ENCODE measurements at regions of chrX and their contacts with region 1.

Region 1: DNA sequence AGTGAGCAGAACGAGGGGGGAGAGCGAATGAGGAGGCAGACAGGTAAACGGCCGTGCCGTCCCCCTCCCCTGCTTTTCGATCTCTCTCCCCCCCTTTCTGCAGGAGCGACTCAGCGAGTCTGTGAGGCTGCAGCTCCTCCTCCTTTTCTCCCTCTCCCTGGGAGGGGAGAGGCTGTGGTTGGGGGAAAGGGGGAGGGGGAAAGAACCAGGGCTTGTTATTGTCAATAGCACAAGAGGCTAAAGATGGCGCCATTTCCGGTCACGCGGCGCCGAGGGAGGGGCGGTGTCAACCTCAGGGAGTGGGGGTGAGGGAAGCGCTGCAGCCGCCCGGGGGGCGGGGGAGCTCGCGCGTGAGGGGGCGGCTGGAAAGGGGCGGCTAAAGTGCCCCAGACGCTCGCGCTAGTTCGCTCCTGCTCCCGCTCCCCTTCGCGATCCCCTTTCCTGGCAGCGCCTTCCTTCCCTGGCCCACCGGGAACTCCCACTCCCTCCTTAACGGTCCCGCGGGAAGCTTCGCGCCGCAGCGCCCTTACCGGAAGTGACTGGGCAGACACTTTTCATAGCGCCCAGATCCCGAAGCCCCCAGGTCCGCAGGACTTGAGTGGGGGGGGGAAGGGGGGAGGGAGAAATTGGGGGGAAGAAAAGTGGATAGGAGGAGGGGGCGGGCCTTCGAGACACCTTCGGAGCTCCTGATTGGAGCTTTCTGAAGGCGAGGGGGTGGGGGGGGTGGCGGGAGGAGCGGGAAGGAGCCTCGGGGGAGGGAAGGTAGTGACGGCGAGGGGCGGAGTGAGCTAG is at the start of gene CUL4B:
- DNase-seq: peak; percentile 84 to 95 (median 89)
- H3K4me3 ChIP-seq: peak within 1 kb of the TSS; percentile 84
- H3K4me3 Mint-ChIP-seq: peak within 1 kb of the TSS; percentile 91 to 99 (median 96)
- H3K27ac ChIP-seq: peak within 1 kb of the TSS; percentile 94
- H3K27ac Mint-ChIP-seq: peak within 1 kb of the TSS; percentile 92 to 99 (median 96)
- H3K4me1 ChIP-seq: peaks cover 25% of the 10 kb centered on the region
- H3K4me1 Mint-ChIP-seq: peaks cover 20 to 39% (median 39%) of the 10 kb centered on the region in 3 donors
- H3K27me3 ChIP-seq: no peaks in the 10 kb centered on the region
- H3K27me3 Mint-ChIP-seq: peaks cover 0 to 2% of the 10 kb centered on the region in 2 donors
- total RNA-seq, gene CUL4B: 26.4 to 28.9 TPM

Region 2: DNA sequence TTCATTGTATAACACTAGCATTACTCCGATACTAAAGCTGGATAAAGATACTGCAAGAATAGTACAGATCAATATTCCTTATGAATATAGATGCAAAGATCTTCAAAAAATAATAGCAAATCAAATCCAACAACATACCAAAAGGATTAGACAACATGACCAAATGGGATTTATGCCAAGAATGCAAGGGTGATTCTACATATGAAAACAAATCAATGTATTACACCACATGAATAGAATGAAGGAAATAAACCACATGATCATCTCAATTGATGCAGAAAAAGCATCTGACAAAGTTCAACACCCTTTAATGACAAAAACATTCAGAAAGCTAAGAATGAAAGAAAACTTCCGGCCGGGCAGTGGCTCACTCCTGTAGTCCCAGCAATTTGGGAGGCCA is 43.1 kb before region 1 on chrX:
- CTCF ChIA-PET with region 1: no interaction called
- POLR2A ChIA-PET with region 1: no interaction called
- DNase-seq: no peak
- H3K4me3 ChIP-seq: no peak overlapping the region
- H3K4me3 Mint-ChIP-seq: no peak overlapping the region
- H3K27ac ChIP-seq: no peak overlapping the region
- H3K27ac Mint-ChIP-seq: no peak overlapping the region
- H3K4me1 ChIP-seq: no peaks in the 10 kb centered on the region
- H3K4me1 Mint-ChIP-seq: peaks cover 0 to 1% (median 0%) of the 10 kb centered on the region in 3 donors
- H3K27me3 ChIP-seq: no peaks in the 10 kb centered on the region
- H3K27me3 Mint-ChIP-seq: peaks cover 0 to 7% of the 10 kb centered on the region in 2 donors

Region 3: GRCh38 chrX:120603707-120604360 is 42.8 kb after region 1 on chrX and contains the start of gene MCTS1:
- CTCF ChIA-PET with region 1: interaction called, 4 read pairs
- POLR2A ChIA-PET with region 1: interaction called, 39 read pairs
- DNase-seq: peak; percentile 61 to 86 (median 82)
- H3K4me3 ChIP-seq: peak within 1 kb of the TSS; percentile 57
- H3K4me3 Mint-ChIP-seq: peak within 1 kb of the TSS; percentile 93 to 98 (median 96)
- H3K27ac ChIP-seq: peak within 1 kb of the TSS; percentile 87
- H3K27ac Mint-ChIP-seq: peak within 1 kb of the TSS; percentile 95 to 99 (median 97)
- H3K4me1 ChIP-seq: peaks cover 11% of the 10 kb centered on the region
- H3K4me1 Mint-ChIP-seq: peaks cover 7 to 13% (median 11%) of the 10 kb centered on the region in 3 donors
- H3K27me3 ChIP-seq: no peaks in the 10 kb centered on the region
- H3K27me3 Mint-ChIP-seq: peaks cover 0 to 9% of the 10 kb centered on the region in 2 donors
- total RNA-seq, gene MCTS1: 61.1 to 75.9 TPM

Region 4: GRCh38 chrX:120629667-120630537 is 68.9 kb after region 1 on chrX and contains the start of gene C1GALT1C1:
- CTCF ChIA-PET with region 1: no interaction called
- POLR2A ChIA-PET with region 1: interaction called, 16 read pairs
- DNase-seq: peak; percentile 85 to 94 (median 93)
- H3K4me3 ChIP-seq: peak within 1 kb of the TSS; percentile 87
- H3K4me3 Mint-ChIP-seq: peak within 1 kb of the TSS; percentile 86 to 98 (median 93)
- H3K27ac ChIP-seq: peak within 1 kb of the TSS; percentile 88
- H3K27ac Mint-ChIP-seq: peak within 1 kb of the TSS; percentile 94 to 100 (median 98)
- H3K4me1 ChIP-seq: peaks cover 16% of the 10 kb centered on the region
- H3K4me1 Mint-ChIP-seq: peaks cover 16 to 28% (median 27%) of the 10 kb centered on the region in 3 donors
- H3K27me3 ChIP-seq: no peaks in the 10 kb centered on the region
- H3K27me3 Mint-ChIP-seq: peaks cover 0 to 3% of the 10 kb centered on the region in 2 donors
- total RNA-seq, gene C1GALT1C1: 16.6 to 18.8 TPM

Region 5: DNA sequence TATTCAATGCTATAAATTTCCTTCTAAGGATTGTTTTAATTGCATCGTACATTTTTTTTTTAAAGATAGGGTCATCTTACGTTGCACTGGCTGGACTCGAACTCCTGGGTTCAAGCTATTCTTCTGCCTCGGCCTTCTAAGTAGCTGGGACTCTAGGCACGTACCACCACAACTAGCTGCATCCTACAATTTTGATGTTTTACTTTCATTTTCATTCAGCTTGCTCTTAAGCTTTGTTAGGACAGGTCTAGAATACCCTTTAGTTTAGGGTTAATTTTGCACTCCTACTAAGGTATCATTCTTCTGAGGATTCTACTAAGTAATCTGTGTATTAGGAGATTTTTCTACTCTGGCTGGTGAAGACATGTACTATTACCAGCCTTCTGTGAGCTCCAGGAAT is 119.1 kb after region 1 on chrX:
- CTCF ChIA-PET with region 1: no interaction called
- POLR2A ChIA-PET with region 1: no interaction called
- DNase-seq: no peak
- H3K4me3 ChIP-seq: no peak overlapping the region
- H3K4me3 Mint-ChIP-seq: peak overlapping the region in 6 of 7 donors; percentile 14 to 55 (median 30)
- H3K27ac ChIP-seq: no peak overlapping the region
- H3K27ac Mint-ChIP-seq: peak overlapping the region in 3 of 8 donors; percentile 5 to 52 (median 21)
- H3K4me1 ChIP-seq: no peaks in the 10 kb centered on the region
- H3K4me1 Mint-ChIP-seq: peaks cover 6 to 8% (median 8%) of the 10 kb centered on the region in 3 donors
- H3K27me3 ChIP-seq: no peaks in the 10 kb centered on the region
- H3K27me3 Mint-ChIP-seq: peaks cover 0 to 6% of the 10 kb centered on the region in 2 donors